Sigmoid colon (tissue), 7 donors: ENCODE measurements at regions of chr2 and their contacts with region 1.

Region 1: GRCh38 chr2:17719562-17720371 is 33.8 kb downstream of the SMC6 start:
- DNase-seq: no peak
- H3K4me3 ChIP-seq: no peak overlapping the region
- H3K27ac ChIP-seq: no peak overlapping the region
- H3K4me1 ChIP-seq: no peaks in the 10 kb centered on the region
- H3K27me3 ChIP-seq: no peaks in the 10 kb centered on the region
- CTCF ChIP-seq: peak in 3 of 4 experiments; percentile 48 to 74 (median 64)
- EP300 ChIP-seq: no peak
- POLR2A ChIP-seq: no peak

Region 2: DNA sequence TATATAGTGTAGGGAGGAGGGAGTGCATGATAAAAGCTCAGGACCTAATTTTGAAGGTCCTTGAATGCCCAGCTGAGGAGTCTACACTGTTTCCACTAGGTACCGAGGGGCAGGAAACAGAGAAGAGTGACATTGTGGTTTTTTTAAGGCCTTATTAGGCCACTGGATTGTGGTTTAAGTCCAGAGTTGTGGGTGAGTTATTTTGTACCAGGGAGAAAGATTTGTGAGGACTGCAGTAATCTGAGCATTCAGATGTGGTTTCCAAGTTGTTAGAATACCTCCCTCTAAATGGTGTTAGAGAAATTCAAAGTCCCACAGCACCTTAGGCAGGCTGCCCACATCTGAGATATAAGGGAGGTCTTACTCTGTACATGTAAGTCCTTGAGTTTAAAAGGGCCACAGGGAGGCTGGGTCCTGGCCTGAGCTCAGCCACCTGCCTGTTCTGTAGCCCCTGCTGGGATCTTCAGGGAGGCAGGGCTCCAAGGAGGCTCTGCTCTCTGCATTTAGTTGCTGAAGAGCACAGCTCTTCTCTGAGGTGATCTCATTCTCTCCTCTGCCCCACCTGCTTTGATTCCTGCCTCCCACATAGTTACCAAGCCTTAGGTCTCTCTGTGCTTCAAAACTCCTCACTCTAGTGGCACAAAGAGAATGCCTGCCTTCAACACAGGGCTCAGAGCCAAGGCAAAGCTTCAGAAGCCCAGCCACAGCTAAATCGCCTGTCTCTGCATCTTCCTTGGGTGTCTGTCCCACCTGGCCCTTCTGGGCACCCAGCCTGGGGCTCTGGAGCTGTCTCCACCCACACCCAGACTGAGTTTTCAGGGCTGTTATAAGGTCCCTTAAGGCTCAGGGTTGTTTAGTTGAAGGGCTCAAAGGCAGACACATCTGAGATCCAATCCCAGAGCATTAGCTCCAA is 91.2 kb before region 1 on chr2:
- intact Hi-C with region 1: no loop called
- DNase-seq: no peak
- H3K4me3 ChIP-seq: no peak overlapping the region
- H3K27ac ChIP-seq: no peak overlapping the region
- H3K4me1 ChIP-seq: no peaks in the 10 kb centered on the region
- H3K27me3 ChIP-seq: no peaks in the 10 kb centered on the region
- CTCF ChIP-seq: no peak
- EP300 ChIP-seq: no peak
- POLR2A ChIP-seq: no peak

Region 3: GRCh38 chr2:17706845-17707244 is 12.9 kb before region 1 on chr2:
- intact Hi-C with region 1: no loop called
- DNase-seq: no peak
- H3K4me3 ChIP-seq: no peak overlapping the region
- H3K27ac ChIP-seq: no peak overlapping the region
- H3K4me1 ChIP-seq: no peaks in the 10 kb centered on the region
- H3K27me3 ChIP-seq: no peaks in the 10 kb centered on the region
- CTCF ChIP-seq: no peak
- EP300 ChIP-seq: no peak
- POLR2A ChIP-seq: no peak

Region 4: GRCh38 chr2:17780546-17780945 is 60.8 kb after region 1 on chr2:
- intact Hi-C with region 1: no loop called
- DNase-seq: no peak
- H3K4me3 ChIP-seq: no peak overlapping the region
- H3K27ac ChIP-seq: no peak overlapping the region
- H3K4me1 ChIP-seq: no peaks in the 10 kb centered on the region
- H3K27me3 ChIP-seq: no peaks in the 10 kb centered on the region
- CTCF ChIP-seq: no peak
- EP300 ChIP-seq: no peak
- POLR2A ChIP-seq: no peak

Region 5: GRCh38 chr2:17830053-17831034 is 110.6 kb after region 1 on chr2:
- intact Hi-C with region 1: loop called (anchors 5 kb)
- DNase-seq: no peak
- H3K4me3 ChIP-seq: peak overlapping the region in 1 of 4 donors; percentile 1
- H3K27ac ChIP-seq: no peak overlapping the region
- H3K4me1 ChIP-seq: peaks cover 0 to 8% (median 7%) of the 10 kb centered on the region in 4 donors
- H3K27me3 ChIP-seq: peaks cover 0 to 26% (median 0%) of the 10 kb centered on the region in 3 donors
- CTCF ChIP-seq: peak in 3 of 4 experiments; percentile 30 to 58 (median 38)
- EP300 ChIP-seq: no peak
- POLR2A ChIP-seq: no peak